Mammary epithelial cell (primary cell): ENCODE measurements at regions of chr11 and their contacts with region 1.

Region 1: DNA sequence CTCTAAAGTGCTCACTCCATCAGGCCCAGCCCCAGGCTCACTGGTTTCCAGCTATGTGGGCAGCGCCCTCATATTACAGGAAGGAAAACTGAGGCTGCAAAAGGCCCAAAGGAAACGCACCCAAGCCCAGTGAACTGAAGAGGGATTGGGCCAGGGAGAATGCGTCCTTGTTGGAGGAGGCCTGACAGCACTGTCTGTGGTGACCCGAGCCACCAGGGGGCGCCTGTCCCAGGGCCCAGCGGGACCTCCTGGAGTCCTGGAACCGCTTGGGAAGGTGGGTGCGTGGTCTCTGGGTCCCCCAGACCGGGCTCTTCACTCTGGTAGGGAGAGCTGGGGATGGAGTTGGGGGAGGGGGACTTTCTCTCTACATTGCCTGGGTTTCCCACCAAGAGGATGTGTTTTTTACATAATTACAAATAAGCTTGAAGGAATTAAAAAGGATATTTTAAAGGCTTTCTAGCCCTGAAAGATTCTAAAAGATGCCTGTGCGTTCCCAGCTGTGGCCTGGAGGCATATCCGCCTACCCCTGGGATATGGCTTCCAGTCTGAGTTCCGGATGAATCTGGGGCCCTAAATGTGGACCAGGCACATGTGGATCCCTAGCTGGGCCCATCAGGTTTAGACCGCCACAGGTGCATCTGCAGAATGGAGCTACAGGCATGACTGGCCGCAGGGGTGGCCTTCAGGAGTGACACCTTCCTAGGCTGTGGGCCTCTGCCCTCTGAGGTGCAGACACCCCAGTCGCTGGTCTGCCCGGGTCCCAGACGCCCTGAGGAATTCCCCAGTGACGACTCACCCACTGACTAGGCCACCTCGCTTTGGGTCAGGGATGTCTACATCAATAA is 4.2 kb downstream of the SPI1 start:
- DNase-seq: peak; percentile 35
- H3K4me3 ChIP-seq: no peak overlapping the region
- H3K27ac ChIP-seq: no peak overlapping the region
- H3K4me1 ChIP-seq: peaks cover 9% of the 10 kb centered on the region
- H3K27me3 ChIP-seq: no peaks in the 10 kb centered on the region
- CTCF ChIP-seq: peak; percentile 83 to 95

Region 2: GRCh38 chr11:47407746-47408590 is 33.9 kb after region 1 on chr11 and contains the start of gene SLC39A13:
- CTCF ChIA-PET with region 1: interaction called, 13 read pairs
- dilution Hi-C with region 1: loop called (anchors 5 kb)
- in situ Hi-C with region 1: no loop called
- intact Hi-C with region 1: loop called (anchors 1 kb)
- DNase-seq: peak; percentile 96
- H3K4me3 ChIP-seq: peak within 1 kb of the TSS; percentile 68 to 79 (median 70)
- H3K27ac ChIP-seq: peak within 1 kb of the TSS; percentile 88
- H3K4me1 ChIP-seq: peaks cover 30% of the 10 kb centered on the region
- H3K27me3 ChIP-seq: no peaks in the 10 kb centered on the region
- CTCF ChIP-seq: peak; percentile 61 to 72
- total RNA-seq, gene SLC39A13: 55.5 to 97.2 TPM

Region 3: GRCh38 chr11:47578524-47579460 is 204.7 kb after region 1 on chr11 and contains the starts of genes KBTBD4 and NDUFS3:
- CTCF ChIA-PET with region 1: no interaction called
- dilution Hi-C with region 1: loop called (anchors 10 kb)
- in situ Hi-C with region 1: no loop called
- intact Hi-C with region 1: no loop called
- DNase-seq: peak; percentile 88
- H3K4me3 ChIP-seq: peak within 1 kb of the TSS; percentile 81 to 97 (median 93)
- H3K27ac ChIP-seq: peak within 1 kb of the TSS; percentile 90
- H3K4me1 ChIP-seq: peaks cover 24% of the 10 kb centered on the region
- H3K27me3 ChIP-seq: no peaks in the 10 kb centered on the region
- CTCF ChIP-seq: no peak
- total RNA-seq, gene KBTBD4: 12.2 to 17.8 TPM
- total RNA-seq, gene NDUFS3: 30.5 to 87.0 TPM

Region 4: GRCh38 chr11:47616726-47617416 is 242.8 kb after region 1 on chr11:
- CTCF ChIA-PET with region 1: no interaction called
- dilution Hi-C with region 1: no loop called
- in situ Hi-C with region 1: no loop called
- intact Hi-C with region 1: loop called (anchors 1 kb)
- DNase-seq: peak; percentile 28
- H3K4me3 ChIP-seq: no peak overlapping the region
- H3K27ac ChIP-seq: no peak overlapping the region
- H3K4me1 ChIP-seq: no peaks in the 10 kb centered on the region
- H3K27me3 ChIP-seq: no peaks in the 10 kb centered on the region
- CTCF ChIP-seq: peak; percentile 43 to 74

Region 5: GRCh38 chr11:47847892-47848635 is 474.0 kb after region 1 on chr11 and contains the start of gene NUP160:
- CTCF ChIA-PET with region 1: no interaction called
- dilution Hi-C with region 1: no loop called
- in situ Hi-C with region 1: no loop called
- intact Hi-C with region 1: loop called (anchors 5 kb)
- DNase-seq: peak; percentile 69
- H3K4me3 ChIP-seq: peak within 1 kb of the TSS; percentile 81 to 97 (median 93)
- H3K27ac ChIP-seq: peak within 1 kb of the TSS; percentile 86
- H3K4me1 ChIP-seq: peaks cover 14% of the 10 kb centered on the region
- H3K27me3 ChIP-seq: no peaks in the 10 kb centered on the region
- CTCF ChIP-seq: no peak
- total RNA-seq, gene NUP160: 20.8 to 29.3 TPM